ENCODE measurements at regions of chr14 and their contacts with region 1.

Region 1: GRCh38 chr14:23929822-23930294 is 23.7 kb upstream of the DHRS4 start:
- DNase-seq: peak; percentile 84
- H3K4me3 ChIP-seq: no peak overlapping the region
- H3K27ac ChIP-seq: no peak overlapping the region
- H3K4me1 ChIP-seq: peaks cover 7% of the 10 kb centered on the region
- H3K27me3 ChIP-seq: no peaks in the 10 kb centered on the region
- CTCF ChIP-seq: peak; percentile 93

Region 2: DNA sequence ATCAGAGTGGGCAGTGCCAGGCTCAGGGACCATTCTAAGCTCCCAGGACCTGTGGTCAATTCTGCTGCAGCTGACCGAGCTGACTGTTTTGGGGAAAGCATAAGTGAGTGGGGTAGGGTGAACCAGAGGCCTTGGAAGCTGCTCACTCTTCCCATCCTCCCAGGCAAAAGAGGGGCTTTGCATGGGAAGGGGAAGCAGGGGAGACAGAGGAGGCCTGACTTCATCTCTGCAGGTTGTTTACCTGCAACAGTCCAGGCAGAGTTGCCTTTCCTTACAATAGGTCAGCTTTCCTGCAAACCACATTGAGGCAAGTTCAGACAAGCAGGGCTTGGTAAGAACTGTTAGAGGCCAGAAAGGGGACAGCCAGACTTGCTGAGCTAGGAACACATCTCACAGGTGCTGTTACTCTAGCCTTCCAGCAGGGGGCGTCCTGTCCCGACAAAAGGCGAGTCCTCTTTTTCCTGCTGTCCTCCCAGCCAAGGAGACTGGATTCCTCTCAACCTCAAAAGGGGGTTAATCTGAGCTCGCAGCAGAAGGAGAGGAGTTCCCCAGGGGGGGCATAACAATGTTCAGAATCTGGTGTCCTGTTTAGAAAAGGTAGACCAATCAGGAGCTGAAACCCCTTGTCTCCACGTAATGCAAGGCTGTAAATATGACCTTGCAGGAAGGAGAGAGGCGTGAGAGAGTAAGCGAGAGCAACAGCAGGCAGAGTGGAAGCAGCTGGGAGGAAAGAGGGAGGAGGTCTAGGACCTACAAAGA is 298.0 kb before region 1 on chr14:
- CTCF ChIA-PET with region 1: interaction called, 8 read pairs
- POLR2A ChIA-PET with region 1: no interaction called
- intact Hi-C with region 1: loop called (anchors 5 kb)
- DNase-seq: peak; percentile 85
- H3K4me3 ChIP-seq: no peak overlapping the region
- H3K27ac ChIP-seq: no peak overlapping the region
- H3K4me1 ChIP-seq: no peaks in the 10 kb centered on the region
- H3K27me3 ChIP-seq: no peaks in the 10 kb centered on the region
- CTCF ChIP-seq: peak; percentile 95

Region 3: GRCh38 chr14:23727566-23728335 is 202.1 kb before region 1 on chr14:
- CTCF ChIA-PET with region 1: no interaction called
- POLR2A ChIA-PET with region 1: no interaction called
- intact Hi-C with region 1: loop called (anchors 1 kb)
- DNase-seq: peak; percentile 74
- H3K4me3 ChIP-seq: no peak overlapping the region
- H3K27ac ChIP-seq: no peak overlapping the region
- H3K4me1 ChIP-seq: no peaks in the 10 kb centered on the region
- H3K27me3 ChIP-seq: no peaks in the 10 kb centered on the region
- CTCF ChIP-seq: peak; percentile 60